CD4-positive, alpha-beta memory T cell (primary cell): ENCODE measurements at regions of chr2 and their contacts with region 1.

Region 1: DNA sequence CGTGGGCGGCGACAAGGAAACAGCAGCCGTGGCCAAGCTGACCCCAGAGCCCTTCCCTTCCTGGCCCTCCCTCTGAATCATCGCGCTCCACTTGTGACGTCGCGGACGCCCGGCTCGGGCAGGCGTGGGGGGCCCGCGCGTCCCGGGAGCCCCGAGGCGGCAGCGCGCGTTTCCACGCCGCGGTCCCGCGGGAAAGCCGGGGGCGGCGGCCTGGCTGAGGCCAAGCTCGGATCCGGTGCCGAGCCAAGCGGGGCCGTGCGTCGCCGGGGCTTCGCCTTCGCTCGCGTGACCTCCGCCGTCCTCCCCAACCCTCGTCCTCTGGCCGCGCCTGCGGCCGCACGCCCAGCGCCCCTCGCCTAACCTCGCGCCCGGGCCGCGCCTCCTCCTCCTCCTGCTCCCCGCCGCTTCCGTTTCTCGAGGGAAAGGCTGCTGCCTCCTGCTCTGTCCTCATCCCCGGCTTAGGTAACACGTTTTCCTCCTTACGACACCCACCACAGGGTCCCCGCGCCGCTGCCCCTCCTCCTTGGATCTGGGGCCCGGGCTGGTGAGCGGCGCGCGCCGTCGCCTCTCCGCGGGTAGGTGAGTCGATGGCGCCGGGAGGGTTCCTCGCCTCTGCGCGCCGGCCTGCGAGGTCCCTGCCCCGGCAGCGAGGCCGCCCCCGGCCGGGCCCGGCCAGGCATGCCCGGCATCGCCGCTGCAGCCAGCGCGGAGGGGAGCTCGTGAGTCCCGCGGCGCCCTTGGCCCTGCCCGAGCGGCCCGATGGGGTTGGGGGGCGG is at the start of gene INPP1:
- DNase-seq: peak; percentile 28 to 45 (median 41)
- H3K4me3 ChIP-seq: peak within 1 kb of the TSS; percentile 28 to 45
- H3K4me3 Mint-ChIP-seq: peak within 1 kb of the TSS; percentile 90 to 99 (median 92)
- H3K27ac ChIP-seq: no peak within 1 kb of the TSS
- H3K27ac Mint-ChIP-seq: peak within 1 kb of the TSS in 6 of 7 donors; percentile 48 to 93 (median 88)
- H3K4me1 ChIP-seq: peaks cover 14% of the 10 kb centered on the region
- H3K4me1 Mint-ChIP-seq: peaks cover 9 to 20% (median 13%) of the 10 kb centered on the region in 4 donors
- H3K27me3 ChIP-seq: no peaks in the 10 kb centered on the region
- H3K27me3 Mint-ChIP-seq: no peaks in the 10 kb centered on the region
- total RNA-seq, gene INPP1: 3.2 to 3.7 TPM

Region 2: GRCh38 chr2:189698020-189698887 is 645.4 kb before region 1 on chr2:
- CTCF ChIA-PET with region 1: no interaction called
- POLR2A ChIA-PET with region 1: no interaction called
- intact Hi-C with region 1: no loop called
- DNase-seq: peak; percentile 40 to 50 (median 48)
- H3K4me3 ChIP-seq: no peak overlapping the region
- H3K4me3 Mint-ChIP-seq: no peak overlapping the region
- H3K27ac ChIP-seq: no peak overlapping the region
- H3K27ac Mint-ChIP-seq: peak overlapping the region in 2 of 7 donors; percentile 3 to 36
- H3K4me1 ChIP-seq: no peaks in the 10 kb centered on the region
- H3K4me1 Mint-ChIP-seq: no peaks in the 10 kb centered on the region
- H3K27me3 ChIP-seq: no peaks in the 10 kb centered on the region
- H3K27me3 Mint-ChIP-seq: no peaks in the 10 kb centered on the region

Region 3: DNA sequence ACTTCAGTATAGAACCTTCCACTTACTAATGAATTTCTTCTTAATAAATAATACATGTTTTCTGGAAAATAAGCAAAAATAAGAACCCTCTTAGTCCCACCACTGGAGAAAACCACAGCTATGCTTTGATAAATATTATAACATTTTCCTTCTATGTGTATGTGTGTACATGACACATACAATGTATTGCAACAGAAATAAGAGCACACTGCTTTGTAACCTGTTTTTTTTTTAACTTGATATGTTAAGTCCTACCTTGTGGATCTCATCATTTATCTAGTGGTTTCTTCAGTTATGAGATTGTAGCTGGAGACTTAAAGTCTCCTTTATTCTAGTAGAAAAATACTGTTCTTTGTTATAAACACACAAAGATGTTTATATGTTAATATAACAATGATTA is 16.9 kb after region 1 on chr2:
- CTCF ChIA-PET with region 1: interaction called, 6 read pairs
- POLR2A ChIA-PET with region 1: interaction called, 14 read pairs
- intact Hi-C with region 1: no loop called
- DNase-seq: no peak
- H3K4me3 ChIP-seq: peak overlapping the region; percentile 49 to 66
- H3K4me3 Mint-ChIP-seq: peak overlapping the region; percentile 90 to 97 (median 94)
- H3K27ac ChIP-seq: peak overlapping the region; percentile 47
- H3K27ac Mint-ChIP-seq: peak overlapping the region; percentile 85 to 99 (median 94)
- H3K4me1 ChIP-seq: peaks cover 27% of the 10 kb centered on the region
- H3K4me1 Mint-ChIP-seq: peaks cover 14 to 36% (median 26%) of the 10 kb centered on the region in 4 donors
- H3K27me3 ChIP-seq: no peaks in the 10 kb centered on the region
- H3K27me3 Mint-ChIP-seq: no peaks in the 10 kb centered on the region

Region 4: DNA sequence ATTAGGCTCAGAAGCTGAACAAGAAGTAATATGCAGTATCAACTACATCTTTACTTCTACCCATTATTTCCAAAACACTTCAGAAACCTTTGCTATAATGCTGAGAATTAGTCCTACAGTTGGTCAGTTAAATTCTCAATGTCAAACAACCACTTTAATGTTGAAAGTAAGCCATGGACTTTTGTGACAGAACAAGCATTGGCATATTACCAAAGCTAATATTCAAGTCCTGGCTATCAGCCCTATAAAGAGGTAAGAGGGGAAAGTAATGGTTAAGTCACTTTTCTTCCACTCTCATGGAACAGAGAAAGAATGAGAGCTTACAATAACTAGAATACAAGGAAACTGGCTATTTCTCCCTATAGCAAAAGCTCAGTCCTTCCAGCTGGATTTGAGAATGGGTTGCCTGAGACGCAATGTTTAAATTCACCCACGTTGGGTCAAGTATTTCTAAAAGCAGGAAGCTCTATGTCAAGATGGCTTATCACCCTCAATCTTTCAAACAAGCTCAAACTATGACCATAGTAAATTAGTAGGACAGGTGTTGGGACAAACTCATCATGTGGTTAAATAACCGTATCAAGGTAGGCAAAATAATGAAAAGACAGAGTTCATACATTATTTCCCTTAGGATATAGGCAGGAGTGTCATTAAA is 33.0 kb after region 1 on chr2:
- CTCF ChIA-PET with region 1: interaction called, 3 read pairs
- POLR2A ChIA-PET with region 1: no interaction called
- intact Hi-C with region 1: loop called (anchors 1 kb)
- DNase-seq: no peak
- H3K4me3 ChIP-seq: no peak overlapping the region
- H3K4me3 Mint-ChIP-seq: no peak overlapping the region
- H3K27ac ChIP-seq: no peak overlapping the region
- H3K27ac Mint-ChIP-seq: no peak overlapping the region
- H3K4me1 ChIP-seq: no peaks in the 10 kb centered on the region
- H3K4me1 Mint-ChIP-seq: peaks cover 0 to 2% (median 0%) of the 10 kb centered on the region in 4 donors
- H3K27me3 ChIP-seq: no peaks in the 10 kb centered on the region
- H3K27me3 Mint-ChIP-seq: no peaks in the 10 kb centered on the region

Region 5: GRCh38 chr2:190413421-190413820 is 69.7 kb after region 1 on chr2:
- CTCF ChIA-PET with region 1: no interaction called
- POLR2A ChIA-PET with region 1: no interaction called
- intact Hi-C with region 1: no loop called
- DNase-seq: no peak
- H3K4me3 ChIP-seq: no peak overlapping the region
- H3K4me3 Mint-ChIP-seq: peak overlapping the region in 7 of 8 donors; percentile 9 to 55 (median 42)
- H3K27ac ChIP-seq: no peak overlapping the region
- H3K27ac Mint-ChIP-seq: peak overlapping the region; percentile 13 to 90 (median 66)
- H3K4me1 ChIP-seq: peaks cover 78% of the 10 kb centered on the region
- H3K4me1 Mint-ChIP-seq: peaks cover 49 to 86% (median 67%) of the 10 kb centered on the region in 4 donors
- H3K27me3 ChIP-seq: no peaks in the 10 kb centered on the region
- H3K27me3 Mint-ChIP-seq: no peaks in the 10 kb centered on the region

Region 6: GRCh38 chr2:190425221-190425866 is 81.7 kb after region 1 on chr2:
- CTCF ChIA-PET with region 1: no interaction called
- POLR2A ChIA-PET with region 1: no interaction called
- intact Hi-C with region 1: no loop called
- DNase-seq: no peak
- H3K4me3 ChIP-seq: no peak overlapping the region
- H3K4me3 Mint-ChIP-seq: no peak overlapping the region
- H3K27ac ChIP-seq: no peak overlapping the region
- H3K27ac Mint-ChIP-seq: peak overlapping the region in 2 of 7 donors; percentile 25 to 32
- H3K4me1 ChIP-seq: peaks cover 23% of the 10 kb centered on the region
- H3K4me1 Mint-ChIP-seq: peaks cover 41 to 74% (median 59%) of the 10 kb centered on the region in 4 donors
- H3K27me3 ChIP-seq: no peaks in the 10 kb centered on the region
- H3K27me3 Mint-ChIP-seq: no peaks in the 10 kb centered on the region